ENCODE measurements at regions of chr9 and their contacts with region 1.

Region 1: DNA sequence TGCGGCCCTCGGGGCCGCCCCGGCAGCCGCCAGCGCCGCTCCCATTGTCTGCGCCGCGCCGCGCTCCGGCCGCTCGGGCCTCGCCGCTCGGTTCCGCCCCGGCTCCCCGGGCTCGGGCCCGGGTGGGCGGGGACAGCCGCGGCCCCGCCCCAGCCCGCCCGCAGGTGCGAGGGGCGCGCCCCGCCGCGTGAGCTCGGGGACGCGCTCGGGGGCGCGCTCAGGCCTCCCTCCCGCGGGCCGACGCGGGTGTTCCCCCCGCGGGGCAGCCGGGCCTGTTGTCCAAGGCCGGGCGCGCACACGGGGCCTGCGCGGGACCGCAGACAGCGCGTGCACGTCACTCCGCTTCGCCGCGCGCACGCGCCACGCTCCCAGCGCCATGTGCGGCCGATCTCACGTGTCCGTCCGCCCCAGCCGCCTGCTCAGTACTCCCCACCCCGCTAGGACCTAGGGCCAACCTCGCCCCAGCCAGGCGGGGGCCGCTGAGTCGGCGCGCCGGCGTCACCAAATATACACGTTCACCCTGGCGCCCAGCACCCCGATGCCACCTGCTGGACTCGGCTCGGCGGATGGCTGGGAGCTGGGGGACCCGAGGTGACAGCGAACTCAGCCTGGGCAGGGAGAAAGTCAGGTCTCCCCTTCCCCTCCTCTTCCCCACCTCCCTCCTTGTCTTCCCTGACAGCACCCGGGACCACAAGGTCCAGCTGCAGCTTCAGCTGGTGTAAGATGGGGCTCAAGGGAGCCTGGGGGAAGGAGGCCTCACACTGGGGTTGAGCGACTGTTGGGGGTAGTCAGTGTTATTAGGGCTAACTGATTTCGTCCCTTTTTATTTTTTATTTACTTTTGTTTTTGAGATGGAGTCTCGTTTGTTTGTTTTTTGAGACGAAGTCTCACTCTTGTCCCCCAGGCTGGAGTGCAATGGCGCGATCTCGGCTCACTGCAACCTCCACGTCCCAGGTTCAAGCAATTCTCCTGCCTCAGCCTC is 14.3 kb downstream of the GBGT1 start:
- DNase-seq: peak; percentile 90 to 94
- H3K4me3 ChIP-seq: peak overlapping the region; percentile 60 to 82
- H3K27ac ChIP-seq: peak overlapping the region; percentile 84 to 86
- H3K4me1 ChIP-seq: peaks cover 0 to 36% (median 24%) of the 10 kb centered on the region in 4 donors
- H3K27me3 ChIP-seq: no peaks in the 10 kb centered on the region
- CTCF ChIP-seq: peak; percentile 24 to 38

Region 2: DNA sequence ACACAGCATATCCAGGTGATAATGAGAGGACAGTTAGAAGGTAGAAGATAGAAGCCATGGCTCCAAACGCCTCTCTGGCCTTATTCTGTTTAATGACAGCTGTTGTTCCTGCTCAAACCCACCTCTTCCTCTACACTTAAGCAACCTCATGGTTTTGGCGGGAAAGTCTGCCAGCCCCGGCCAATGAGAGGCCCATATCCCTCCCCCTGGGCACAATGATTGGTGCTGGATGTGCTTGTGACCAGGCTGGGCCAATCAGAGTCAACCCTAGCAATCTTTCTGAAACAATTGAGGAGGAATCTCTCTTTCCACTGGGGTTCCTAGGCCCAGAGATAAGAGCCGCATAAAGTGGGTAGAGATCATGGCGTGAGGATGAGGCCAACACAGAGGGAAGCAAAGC is 175.7 kb before region 1 on chr9:
- intact Hi-C with region 1: no loop called
- DNase-seq: no peak
- H3K4me3 ChIP-seq: no peak overlapping the region
- H3K27ac ChIP-seq: no peak overlapping the region
- H3K4me1 ChIP-seq: no peaks in the 10 kb centered on the region
- H3K27me3 ChIP-seq: peaks cover 0 to 78% of the 10 kb centered on the region in 2 donors
- CTCF ChIP-seq: no peak

Region 3: DNA sequence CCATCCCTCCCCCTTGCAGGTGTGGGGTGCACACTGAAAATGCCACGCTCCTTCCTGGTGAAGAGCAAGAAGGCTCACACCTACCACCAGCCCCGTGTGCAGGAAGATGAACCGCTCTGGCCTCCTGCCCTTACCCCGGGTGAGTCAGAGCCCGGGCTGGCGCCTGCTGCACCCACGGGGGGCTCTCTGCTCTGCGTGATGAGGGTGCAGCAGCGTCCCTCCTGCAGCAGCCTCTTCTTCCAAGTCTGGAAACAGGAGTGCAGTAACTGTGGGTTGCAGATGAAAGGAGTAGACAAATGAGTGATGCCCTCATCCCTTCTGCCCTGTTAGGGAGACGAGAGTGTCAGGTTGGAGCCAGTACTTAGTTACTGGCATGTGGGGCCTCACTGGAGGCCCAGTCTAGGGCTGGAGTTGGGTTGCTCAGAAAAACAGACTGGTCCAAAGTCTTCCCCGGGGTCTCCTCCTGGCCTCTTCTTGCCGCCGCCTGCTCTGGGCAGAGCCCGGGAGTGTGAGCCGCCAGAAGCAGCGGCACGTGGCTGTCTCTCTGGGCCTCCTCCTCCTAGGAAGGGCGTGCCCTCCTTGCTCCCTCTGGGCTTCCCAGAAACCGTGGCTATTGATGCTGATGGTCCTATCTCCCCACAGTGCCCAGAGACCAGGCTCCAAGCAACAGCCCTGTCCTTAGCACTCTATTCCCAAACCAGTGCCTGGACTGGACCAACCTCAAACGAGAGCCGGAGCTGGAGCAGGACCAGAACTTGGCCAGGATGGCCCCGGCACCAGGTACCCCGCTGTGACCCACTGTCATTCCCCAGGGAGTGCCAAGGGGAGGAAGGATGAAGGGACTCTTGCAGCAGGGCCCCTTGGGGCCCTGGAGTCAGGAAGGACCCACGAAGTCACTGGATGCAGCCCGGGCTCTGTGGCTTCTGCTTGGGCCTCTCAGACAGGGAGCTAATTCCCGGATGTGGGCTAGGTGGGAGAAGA is 162.5 kb before region 1 on chr9:
- intact Hi-C with region 1: no loop called
- DNase-seq: no peak
- H3K4me3 ChIP-seq: no peak overlapping the region
- H3K27ac ChIP-seq: no peak overlapping the region
- H3K4me1 ChIP-seq: no peaks in the 10 kb centered on the region
- H3K27me3 ChIP-seq: peaks cover 0 to 80% of the 10 kb centered on the region in 2 donors
- CTCF ChIP-seq: no peak

Region 4: DNA sequence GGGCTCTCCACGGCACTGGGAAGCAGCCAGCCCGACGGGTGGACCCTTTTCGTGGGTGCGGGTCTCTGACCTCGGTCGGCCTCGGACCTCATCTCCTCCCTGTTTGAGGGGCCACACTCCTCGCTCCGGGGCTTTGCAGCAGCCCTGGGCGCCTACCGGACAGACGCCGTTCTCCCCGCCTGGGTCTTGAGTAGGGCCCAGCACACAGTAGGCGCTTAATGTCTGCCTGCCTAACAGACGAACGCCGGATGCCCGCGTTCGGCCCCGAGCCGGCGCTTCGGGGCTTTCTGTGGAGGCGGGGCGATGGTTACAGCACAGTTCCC is 119.5 kb before region 1 on chr9:
- intact Hi-C with region 1: loop called (anchors 5 kb)
- DNase-seq: no peak
- H3K4me3 ChIP-seq: peak overlapping the region; percentile 96
- H3K27ac ChIP-seq: peak overlapping the region; percentile 93 to 95
- H3K4me1 ChIP-seq: peaks cover 0 to 40% (median 26%) of the 10 kb centered on the region in 4 donors
- H3K27me3 ChIP-seq: no peaks in the 10 kb centered on the region
- CTCF ChIP-seq: no peak

Measured in tibial artery (tissue), 4 donors.